CD4-positive, alpha-beta memory T cell (primary cell): ENCODE measurements at regions of chr1 and their contacts with region 1.

Region 1: DNA sequence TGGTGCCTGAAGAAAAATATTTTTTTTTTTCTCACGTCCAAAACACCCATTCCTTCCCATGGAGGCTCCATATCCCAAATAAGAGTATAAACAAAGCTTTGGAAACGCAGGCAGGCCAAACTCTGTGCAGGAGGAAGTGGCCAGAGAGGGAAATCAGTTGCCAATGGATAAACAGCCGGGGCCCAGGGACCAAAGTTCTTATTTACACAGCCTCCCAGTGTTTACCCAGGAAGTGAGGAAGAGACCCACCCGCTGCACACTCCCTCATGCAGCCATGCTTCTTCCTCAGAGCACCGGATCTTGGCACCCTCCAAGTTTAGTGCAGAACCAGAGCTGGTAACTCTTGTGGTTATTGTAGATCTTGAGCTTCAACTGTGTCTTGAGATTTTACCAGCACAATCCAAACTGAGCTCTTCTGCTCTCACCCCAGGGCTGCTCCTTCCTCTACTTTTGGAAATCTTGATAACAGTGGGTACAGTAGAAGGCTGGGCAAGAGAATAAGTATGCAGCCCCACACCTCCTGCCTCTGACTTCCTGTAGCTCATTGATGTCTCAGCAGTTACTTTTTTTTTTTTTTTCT is 14.2 kb downstream of the MARCKSL1 start:
- DNase-seq: peak; percentile 55 to 66 (median 59)
- H3K4me3 ChIP-seq: no peak overlapping the region
- H3K4me3 Mint-ChIP-seq: peak overlapping the region; percentile 72 to 85 (median 78)
- H3K27ac ChIP-seq: peak overlapping the region; percentile 18
- H3K27ac Mint-ChIP-seq: peak overlapping the region; percentile 88 to 96 (median 90)
- H3K4me1 ChIP-seq: peaks cover 63% of the 10 kb centered on the region
- H3K4me1 Mint-ChIP-seq: peaks cover 26 to 55% (median 42%) of the 10 kb centered on the region in 4 donors
- H3K27me3 ChIP-seq: no peaks in the 10 kb centered on the region
- H3K27me3 Mint-ChIP-seq: no peaks in the 10 kb centered on the region

Region 2: DNA sequence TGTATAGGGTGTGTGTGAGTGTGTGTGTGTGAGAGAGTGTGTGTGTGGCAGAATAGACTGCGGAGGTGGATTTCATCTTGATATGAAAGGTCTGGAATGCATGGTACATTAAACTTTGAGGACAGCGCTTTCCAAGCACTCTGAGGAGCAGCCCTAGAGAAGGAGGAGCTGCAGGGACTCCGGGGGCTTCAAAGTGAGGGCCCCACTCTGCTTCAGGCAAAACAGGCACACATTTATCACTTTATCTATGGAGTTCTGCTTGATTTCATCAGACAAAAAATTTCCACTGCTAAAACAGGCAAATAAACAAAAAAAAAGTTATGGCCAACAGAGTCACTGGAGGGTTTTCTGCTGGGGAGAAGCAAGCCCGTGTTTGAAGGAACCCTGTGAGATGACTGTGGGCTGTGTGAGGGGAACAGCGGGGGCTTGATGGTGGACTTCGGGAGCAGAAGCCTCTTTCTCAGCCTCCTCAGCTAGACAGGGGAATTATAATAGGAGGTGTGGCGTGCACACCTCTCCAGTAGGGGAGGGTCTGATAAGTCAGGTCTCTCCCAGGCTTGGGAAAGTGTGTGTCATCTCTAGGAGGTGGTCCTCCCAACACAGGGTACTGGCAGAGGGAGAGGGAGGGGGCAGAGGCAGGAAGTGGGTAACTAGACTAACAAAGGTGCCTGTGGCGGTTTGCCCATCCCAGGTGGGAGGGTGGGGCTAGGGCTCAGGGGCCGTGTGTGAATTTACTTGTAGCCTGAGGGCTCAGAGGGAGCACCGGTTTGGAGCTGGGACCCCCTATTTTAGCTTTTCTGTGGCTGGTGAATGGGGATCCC is 48.2 kb before region 1 on chr1:
- CTCF ChIA-PET with region 1: no interaction called
- POLR2A ChIA-PET with region 1: interaction called, 13 read pairs
- intact Hi-C with region 1: no loop called
- DNase-seq: peak; percentile 80 to 98 (median 82)
- H3K4me3 ChIP-seq: peak overlapping the region; percentile 5 to 36
- H3K4me3 Mint-ChIP-seq: peak overlapping the region; percentile 80 to 89 (median 82)
- H3K27ac ChIP-seq: peak overlapping the region; percentile 62
- H3K27ac Mint-ChIP-seq: peak overlapping the region; percentile 95 to 100 (median 97)
- H3K4me1 ChIP-seq: peaks cover 61% of the 10 kb centered on the region
- H3K4me1 Mint-ChIP-seq: peaks cover 44 to 63% (median 51%) of the 10 kb centered on the region in 4 donors
- H3K27me3 ChIP-seq: no peaks in the 10 kb centered on the region
- H3K27me3 Mint-ChIP-seq: no peaks in the 10 kb centered on the region

Region 3: GRCh38 chr1:32351399-32352238 is 29.8 kb after region 1 on chr1:
- CTCF ChIA-PET with region 1: interaction called, 3 read pairs
- POLR2A ChIA-PET with region 1: interaction called, 10 read pairs
- intact Hi-C with region 1: no loop called
- DNase-seq: peak; percentile 90 to 94 (median 91)
- H3K4me3 ChIP-seq: peak overlapping the region; percentile 52 to 65
- H3K4me3 Mint-ChIP-seq: peak overlapping the region; percentile 71 to 90 (median 82)
- H3K27ac ChIP-seq: peak overlapping the region; percentile 71
- H3K27ac Mint-ChIP-seq: peak overlapping the region; percentile 86 to 97 (median 92)
- H3K4me1 ChIP-seq: peaks cover 39% of the 10 kb centered on the region
- H3K4me1 Mint-ChIP-seq: peaks cover 22 to 62% (median 39%) of the 10 kb centered on the region in 4 donors
- H3K27me3 ChIP-seq: no peaks in the 10 kb centered on the region
- H3K27me3 Mint-ChIP-seq: no peaks in the 10 kb centered on the region

Region 4: DNA sequence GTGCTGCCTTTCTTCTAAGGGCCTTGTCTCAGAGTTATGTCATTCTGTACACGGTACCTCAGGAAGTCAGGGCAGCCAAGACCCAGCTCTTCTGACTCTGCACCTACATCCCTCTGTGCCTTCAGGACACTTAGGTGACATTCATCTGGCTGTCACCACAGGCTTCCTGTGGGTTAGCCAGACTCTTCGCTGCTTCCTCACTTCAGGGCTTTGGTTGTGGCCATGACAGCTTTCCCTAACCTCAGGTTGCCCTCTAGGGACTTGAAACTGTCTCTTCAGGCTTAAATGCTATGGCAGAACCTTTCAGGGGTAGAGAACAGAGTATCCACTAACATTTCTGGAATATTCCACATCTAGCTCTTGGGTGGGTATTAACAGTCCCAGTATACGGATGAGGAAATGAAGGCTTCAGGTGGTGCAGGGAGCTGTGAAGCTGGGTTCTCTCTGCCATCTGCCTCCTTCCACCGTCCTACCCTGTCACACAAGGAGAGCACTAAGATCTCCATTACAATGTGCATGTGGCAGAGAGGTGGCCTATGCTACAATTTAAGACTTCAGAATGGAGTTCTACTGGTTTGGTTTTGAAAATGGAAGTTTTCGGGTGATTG is 50.5 kb after region 1 on chr1:
- CTCF ChIA-PET with region 1: interaction called, 5 read pairs
- POLR2A ChIA-PET with region 1: interaction called, 10 read pairs
- intact Hi-C with region 1: no loop called
- DNase-seq: peak; percentile 74 to 86 (median 77)
- H3K4me3 ChIP-seq: no peak overlapping the region
- H3K4me3 Mint-ChIP-seq: peak overlapping the region in 4 of 8 donors; percentile 5 to 36 (median 16)
- H3K27ac ChIP-seq: no peak overlapping the region
- H3K27ac Mint-ChIP-seq: peak overlapping the region in 6 of 7 donors; percentile 10 to 80 (median 47)
- H3K4me1 ChIP-seq: peaks cover 15% of the 10 kb centered on the region
- H3K4me1 Mint-ChIP-seq: peaks cover 13 to 22% (median 20%) of the 10 kb centered on the region in 4 donors
- H3K27me3 ChIP-seq: no peaks in the 10 kb centered on the region
- H3K27me3 Mint-ChIP-seq: no peaks in the 10 kb centered on the region

Region 5: DNA sequence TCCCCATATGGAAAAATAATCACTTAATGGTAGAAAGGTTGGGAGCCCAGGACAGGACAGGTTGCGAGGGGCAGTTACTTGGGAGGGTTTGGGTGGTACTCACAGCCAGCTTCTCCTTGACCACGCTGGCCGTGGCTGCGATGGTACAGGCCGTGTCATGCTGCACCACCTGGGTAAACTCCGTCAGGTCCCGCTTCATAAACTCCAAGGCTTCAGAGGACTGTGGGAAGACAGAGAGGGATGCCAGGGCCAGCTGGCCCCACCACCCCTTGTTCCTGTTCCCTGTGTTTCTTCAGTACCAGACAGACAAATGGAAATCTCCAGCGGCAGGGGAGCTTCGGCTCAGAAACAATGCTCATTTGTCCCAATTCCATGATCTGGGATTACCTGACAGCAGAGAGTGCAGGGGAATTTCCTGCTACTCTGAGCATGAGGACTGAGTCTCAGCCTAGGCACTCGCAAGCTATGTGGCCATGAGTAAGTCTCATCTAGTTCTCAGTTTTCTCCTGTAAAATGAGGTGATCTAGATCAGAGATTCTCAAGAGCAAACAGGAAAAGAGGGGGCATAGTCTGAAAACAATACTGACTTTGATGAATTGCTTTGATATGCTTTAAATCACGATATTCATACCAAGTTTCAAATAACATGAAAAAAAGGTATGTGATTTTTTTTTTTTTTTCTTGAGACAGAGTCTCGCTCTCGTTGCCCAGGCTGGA is 65.0 kb after region 1 on chr1:
- CTCF ChIA-PET with region 1: no interaction called
- POLR2A ChIA-PET with region 1: no interaction called
- intact Hi-C with region 1: no loop called
- DNase-seq: no peak
- H3K4me3 ChIP-seq: no peak overlapping the region
- H3K4me3 Mint-ChIP-seq: no peak overlapping the region
- H3K27ac ChIP-seq: no peak overlapping the region
- H3K27ac Mint-ChIP-seq: peak overlapping the region in 1 of 7 donors; percentile 6
- H3K4me1 ChIP-seq: peaks cover 18% of the 10 kb centered on the region
- H3K4me1 Mint-ChIP-seq: peaks cover 0 to 7% (median 3%) of the 10 kb centered on the region in 4 donors
- H3K27me3 ChIP-seq: no peaks in the 10 kb centered on the region
- H3K27me3 Mint-ChIP-seq: no peaks in the 10 kb centered on the region